Psoas muscle (tissue), 8 donors: ENCODE measurements at regions of chr3 and their contacts with region 1.

Region 1: GRCh38 chr3:5057857-5058324 is 64.2 kb upstream of the ARL8B start:
- DNase-seq: peak; percentile 63 to 77
- ATAC-seq: peak; percentile 69 to 81 (median 72)
- H3K4me3 ChIP-seq: no peak overlapping the region
- H3K27ac ChIP-seq: no peak overlapping the region
- H3K4me1 ChIP-seq: peaks cover 20% of the 10 kb centered on the region
- H3K27me3 ChIP-seq: no peaks in the 10 kb centered on the region
- CTCF ChIP-seq: peak; percentile 85

Region 2: DNA sequence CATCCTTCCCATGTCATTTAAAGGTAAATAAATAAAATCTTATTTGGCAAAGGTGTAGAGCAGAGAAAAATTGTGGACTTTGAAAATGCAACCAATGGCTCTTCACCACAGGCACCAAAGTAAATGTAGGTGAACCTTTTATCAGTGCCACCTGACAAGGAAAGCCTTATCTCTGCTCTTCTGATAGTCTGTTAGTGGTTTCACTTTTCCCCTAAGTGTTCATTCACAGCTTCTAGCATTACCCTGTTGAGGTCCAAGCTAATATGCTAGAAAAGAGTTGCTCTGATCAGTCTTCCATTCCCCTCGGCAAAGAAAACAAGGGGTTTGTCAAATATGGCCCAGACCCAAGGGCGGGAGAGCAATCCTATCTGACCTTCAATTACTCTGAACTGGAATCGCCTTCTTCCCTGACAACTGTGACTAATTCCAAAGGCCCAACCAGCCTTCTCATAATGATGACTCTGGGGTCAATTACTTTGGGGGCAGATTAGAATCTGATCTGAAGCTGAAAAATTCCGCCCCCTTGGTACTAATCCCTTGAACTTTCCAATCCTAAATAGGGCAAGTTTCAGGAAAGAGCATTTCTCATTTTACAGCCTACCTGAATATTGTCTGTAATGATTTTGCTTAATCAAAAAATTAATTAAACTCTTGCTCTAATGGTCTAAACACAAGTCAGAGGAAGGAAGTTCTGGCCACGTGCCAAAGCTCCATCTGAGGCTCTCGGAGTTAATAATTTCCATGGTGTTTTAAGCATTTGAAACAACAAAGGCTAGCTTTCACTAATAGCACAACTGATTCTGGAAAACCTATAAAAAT is 702.3 kb before region 1 on chr3:
- intact Hi-C with region 1: no loop called
- DNase-seq: peak; percentile 35 to 60
- ATAC-seq: no peak
- H3K4me3 ChIP-seq: no peak overlapping the region
- H3K27ac ChIP-seq: no peak overlapping the region
- H3K4me1 ChIP-seq: no peaks in the 10 kb centered on the region
- H3K27me3 ChIP-seq: no peaks in the 10 kb centered on the region
- CTCF ChIP-seq: no peak

Region 3: GRCh38 chr3:4656059-4656458 is 401.8 kb before region 1 on chr3:
- intact Hi-C with region 1: loop called in 1 of 2 experiments (anchors 2 kb)
- DNase-seq: peak; percentile 43 to 71
- ATAC-seq: peak; percentile 80 to 94 (median 84)
- H3K4me3 ChIP-seq: no peak overlapping the region
- H3K27ac ChIP-seq: no peak overlapping the region
- H3K4me1 ChIP-seq: no peaks in the 10 kb centered on the region
- H3K27me3 ChIP-seq: no peaks in the 10 kb centered on the region
- CTCF ChIP-seq: peak; percentile 79

Region 4: GRCh38 chr3:4986782-4987537 is 70.9 kb before region 1 on chr3:
- intact Hi-C with region 1: loop called in 1 of 2 experiments (anchors 2 kb)
- DNase-seq: peak; percentile 98 to 99
- ATAC-seq: peak; percentile 68 to 83 (median 78)
- H3K4me3 ChIP-seq: peak overlapping the region; percentile 99
- H3K27ac ChIP-seq: peak overlapping the region; percentile 100
- H3K4me1 ChIP-seq: peaks cover 53% of the 10 kb centered on the region
- H3K27me3 ChIP-seq: no peaks in the 10 kb centered on the region
- CTCF ChIP-seq: no peak